Activated CD4-positive, alpha-beta memory T cell treated with anti-CD3 and anti-CD28 coated beads for 36 hours (primary cell): ENCODE measurements at regions of chrX and their contacts with region 1.

Region 1: GRCh38 chrX:136577552-136577951 is 45.5 kb downstream of the VGLL1 start:
- DNase-seq: peak; percentile 83
- H3K4me3 Mint-ChIP-seq: peak overlapping the region; percentile 50
- H3K27ac Mint-ChIP-seq: peak overlapping the region; percentile 82
- H3K4me1 Mint-ChIP-seq: peaks cover 44% of the 10 kb centered on the region
- H3K27me3 Mint-ChIP-seq: no peaks in the 10 kb centered on the region

Region 2: GRCh38 chrX:135985141-135985972 is 592.2 kb before region 1 on chrX and contains the start of gene SLC9A6:
- CTCF ChIA-PET with region 1: no interaction called
- POLR2A ChIA-PET with region 1: no interaction called
- intact Hi-C with region 1: loop called (anchors 10 kb)
- DNase-seq: peak; percentile 77
- H3K4me3 Mint-ChIP-seq: peak within 1 kb of the TSS; percentile 89
- H3K27ac Mint-ChIP-seq: peak within 1 kb of the TSS; percentile 86
- H3K4me1 Mint-ChIP-seq: peaks cover 59% of the 10 kb centered on the region
- H3K27me3 Mint-ChIP-seq: no peaks in the 10 kb centered on the region
- total RNA-seq, gene SLC9A6: 14.3 to 14.5 TPM

Region 3: DNA sequence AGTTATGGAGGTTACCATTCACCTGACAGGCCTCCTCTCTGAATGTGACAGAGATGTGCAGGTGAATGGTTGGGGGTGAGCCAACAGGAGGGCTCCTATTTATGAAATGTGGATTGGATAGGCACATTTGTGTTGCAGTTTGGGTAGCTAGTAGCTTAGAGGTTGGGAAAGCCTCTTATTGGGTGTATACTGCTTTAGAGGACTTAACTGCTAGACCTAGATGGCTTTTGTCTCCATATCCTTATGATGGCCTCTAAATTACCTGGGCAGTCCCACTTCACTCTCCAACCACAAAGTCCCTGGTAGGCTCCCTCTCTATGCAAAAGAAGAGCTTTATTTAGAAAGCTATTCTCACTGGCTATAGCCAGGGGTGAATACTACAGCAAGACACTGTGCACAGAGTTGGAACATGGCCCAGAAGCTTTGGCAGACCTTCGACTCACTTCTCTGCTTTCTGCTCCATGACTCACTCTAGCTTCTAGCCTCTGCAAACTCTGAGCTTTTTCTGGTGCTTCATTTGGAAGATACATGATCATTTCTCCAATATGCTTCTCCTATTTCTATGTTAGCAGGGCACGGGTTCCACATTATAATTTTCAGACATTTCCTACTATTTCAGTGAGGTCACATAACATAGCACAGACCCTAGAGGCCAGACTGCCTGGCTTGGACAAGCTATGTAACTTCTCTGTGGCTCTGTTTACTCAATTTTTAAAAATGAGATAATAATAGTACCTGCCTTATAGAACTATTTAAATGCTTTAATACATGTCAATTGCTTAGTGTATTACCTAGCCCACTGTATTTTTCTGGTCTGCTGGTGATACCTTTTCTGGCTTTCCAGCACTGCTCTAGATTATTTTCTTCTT is 51.6 kb before region 1 on chrX:
- CTCF ChIA-PET with region 1: no interaction called
- POLR2A ChIA-PET with region 1: no interaction called
- intact Hi-C with region 1: loop called (anchors 10 kb)
- DNase-seq: peak; percentile 17
- H3K4me3 Mint-ChIP-seq: no peak overlapping the region
- H3K27ac Mint-ChIP-seq: no peak overlapping the region
- H3K4me1 Mint-ChIP-seq: peaks cover 9% of the 10 kb centered on the region
- H3K27me3 Mint-ChIP-seq: no peaks in the 10 kb centered on the region

Region 4: DNA sequence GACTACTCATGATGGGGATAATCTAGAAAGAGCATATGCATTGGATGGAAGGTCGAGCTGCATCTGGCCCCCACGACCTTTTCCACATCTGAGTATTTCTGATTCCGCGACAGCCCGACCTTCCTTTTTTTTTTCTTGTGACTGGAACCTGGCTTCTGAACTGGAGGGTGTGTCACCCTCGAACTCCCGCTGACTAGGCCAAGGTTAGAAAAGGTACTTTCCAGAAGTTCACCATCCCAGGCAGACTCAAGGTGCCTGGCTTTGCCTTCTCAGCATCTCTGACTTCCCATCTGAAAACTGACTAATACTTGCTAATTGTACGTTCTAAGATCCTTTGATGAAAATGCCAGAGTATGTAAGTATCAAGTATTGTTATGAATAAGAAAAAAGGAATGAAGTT is 21.1 kb after region 1 on chrX:
- CTCF ChIA-PET with region 1: interaction called, 4 read pairs
- POLR2A ChIA-PET with region 1: interaction called, 3 read pairs
- intact Hi-C with region 1: loop called (anchors 2 kb)
- DNase-seq: peak; percentile 63
- H3K4me3 Mint-ChIP-seq: peak overlapping the region; percentile 54
- H3K27ac Mint-ChIP-seq: peak overlapping the region; percentile 92
- H3K4me1 Mint-ChIP-seq: peaks cover 62% of the 10 kb centered on the region
- H3K27me3 Mint-ChIP-seq: no peaks in the 10 kb centered on the region

Region 5: DNA sequence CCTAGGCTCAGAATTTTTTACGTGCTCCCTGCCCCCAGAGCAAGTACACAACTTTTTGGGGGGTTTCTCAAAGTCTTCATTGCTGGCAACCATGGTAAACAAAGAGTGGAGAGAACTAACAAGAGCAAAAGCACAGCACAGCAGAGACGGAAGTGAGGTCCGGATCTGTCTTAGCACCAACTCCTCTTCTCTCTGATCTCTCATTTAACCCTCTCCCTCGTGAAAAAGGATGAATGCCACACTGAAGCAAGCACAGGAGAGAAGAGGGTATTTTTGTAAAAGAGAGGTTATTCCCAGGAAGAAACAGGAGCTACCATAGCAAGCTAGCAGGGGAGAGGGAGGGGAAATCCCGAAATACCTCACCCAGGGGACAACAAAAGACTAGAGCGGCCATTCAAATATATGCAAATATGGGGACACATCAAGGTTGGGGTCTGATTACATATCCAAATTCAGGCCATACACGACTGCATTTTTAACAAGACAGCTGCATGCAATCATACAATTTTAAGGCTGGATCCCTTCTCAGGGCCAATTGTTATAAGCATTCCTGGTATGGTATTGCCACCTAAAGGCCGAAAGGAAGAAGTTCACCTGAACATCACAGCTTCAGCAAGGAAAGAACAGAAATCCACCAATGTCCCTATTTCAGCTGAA is 117.0 kb after region 1 on chrX:
- CTCF ChIA-PET with region 1: interaction called, 25 read pairs
- POLR2A ChIA-PET with region 1: interaction called, 3 read pairs
- intact Hi-C with region 1: no loop called
- DNase-seq: no peak
- H3K4me3 Mint-ChIP-seq: peak overlapping the region; percentile 77
- H3K27ac Mint-ChIP-seq: peak overlapping the region; percentile 97
- H3K4me1 Mint-ChIP-seq: peaks cover 75% of the 10 kb centered on the region
- H3K27me3 Mint-ChIP-seq: no peaks in the 10 kb centered on the region

Region 6: GRCh38 chrX:136909706-136910564 is 332.4 kb after region 1 on chrX:
- CTCF ChIA-PET with region 1: no interaction called
- POLR2A ChIA-PET with region 1: no interaction called
- intact Hi-C with region 1: loop called (anchors 10 kb)
- DNase-seq: peak; percentile 78
- H3K4me3 Mint-ChIP-seq: peak overlapping the region; percentile 91
- H3K27ac Mint-ChIP-seq: peak overlapping the region; percentile 90
- H3K4me1 Mint-ChIP-seq: peaks cover 15% of the 10 kb centered on the region
- H3K27me3 Mint-ChIP-seq: no peaks in the 10 kb centered on the region

Region 7: GRCh38 chrX:136941396-136942337 is 364.1 kb after region 1 on chrX:
- CTCF ChIA-PET with region 1: no interaction called
- POLR2A ChIA-PET with region 1: no interaction called
- intact Hi-C with region 1: no loop called
- DNase-seq: no peak
- H3K4me3 Mint-ChIP-seq: no peak overlapping the region
- H3K27ac Mint-ChIP-seq: no peak overlapping the region
- H3K4me1 Mint-ChIP-seq: peaks cover 8% of the 10 kb centered on the region
- H3K27me3 Mint-ChIP-seq: no peaks in the 10 kb centered on the region